ENCODE measurements at regions of chr17 and their contacts with region 1.

Region 1: GRCh38 chr17:70478902-70479301 is 309.6 kb downstream of the KCNJ2 start:
- DNase-seq: no peak
- ATAC-seq: peak; percentile 49 to 95 (median 72)
- H3K4me3 ChIP-seq: no peak overlapping the region
- H3K27ac ChIP-seq: peak overlapping the region in 5 of 10 donors; percentile 17 to 50 (median 38)
- H3K4me1 ChIP-seq: peaks cover 0 to 13% (median 4%) of the 10 kb centered on the region in 9 donors
- H3K27me3 ChIP-seq: no peaks in the 10 kb centered on the region
- CTCF ChIP-seq: no peak

Region 2: GRCh38 chr17:70521821-70522256 is 42.9 kb after region 1 on chr17:
- intact Hi-C with region 1: loop called in 1 of 10 experiments (anchors 10 kb)
- DNase-seq: peak; percentile 14 to 62
- ATAC-seq: peak; percentile 16 to 89 (median 82)
- H3K4me3 ChIP-seq: no peak overlapping the region
- H3K27ac ChIP-seq: peak overlapping the region in 7 of 10 donors; percentile 7 to 79 (median 61)
- H3K4me1 ChIP-seq: peaks cover 0 to 23% (median 12%) of the 10 kb centered on the region in 9 donors
- H3K27me3 ChIP-seq: no peaks in the 10 kb centered on the region
- CTCF ChIP-seq: no peak

Measured in heart right ventricle (tissue), 16 donors.